PC-3 (cell line): ENCODE measurements at regions of chr5 and their contacts with region 1.

Region 1: DNA sequence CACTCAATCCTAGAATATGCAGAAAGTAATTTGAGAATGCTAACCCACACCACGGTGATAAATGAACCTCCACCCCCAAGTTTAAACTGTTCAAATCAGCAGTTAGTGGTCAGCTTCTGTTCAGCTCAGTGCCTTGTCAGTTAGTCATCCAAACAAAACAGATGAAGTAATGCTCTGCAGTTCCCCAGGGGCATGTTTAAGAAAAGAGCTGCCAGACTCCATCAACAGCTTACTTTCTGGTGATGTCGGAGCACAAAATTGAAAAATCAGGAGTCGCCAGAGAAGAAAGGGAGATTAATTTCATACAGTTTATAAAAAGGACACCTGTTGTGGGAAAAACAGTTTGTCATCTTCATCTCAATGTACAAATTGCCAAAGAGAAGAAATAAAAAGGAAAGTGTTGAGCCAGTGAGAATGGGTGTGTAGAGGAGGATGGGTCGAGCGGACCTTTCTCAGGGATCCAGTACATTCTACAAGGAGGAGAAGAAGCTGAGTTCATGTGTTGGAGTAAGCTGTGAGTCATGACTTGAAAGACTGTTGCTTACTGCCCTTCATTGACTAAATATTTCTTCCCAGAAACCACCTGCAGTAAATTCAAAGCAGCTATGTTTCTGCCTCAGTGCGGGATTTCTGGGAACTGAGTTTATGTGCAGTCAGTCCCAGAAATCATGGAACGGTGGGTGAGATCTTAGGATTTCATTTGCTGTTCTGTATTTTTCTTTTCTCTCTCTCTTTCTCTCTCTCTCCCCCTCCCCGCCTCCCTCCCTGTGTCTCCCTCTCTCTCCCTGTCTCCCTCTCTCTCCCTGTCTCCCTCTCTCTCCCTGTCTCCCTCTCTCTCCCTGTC is 13.7 kb downstream of the TRIO start:
- DNase-seq: peak; percentile 98
- ATAC-seq: peak; percentile 88
- H3K4me3 ChIP-seq: peak overlapping the region; percentile 63
- H3K27ac ChIP-seq: peak overlapping the region; percentile 94
- H3K4me1 ChIP-seq: peaks cover 74% of the 10 kb centered on the region
- H3K27me3 ChIP-seq: no peaks in the 10 kb centered on the region
- CTCF ChIP-seq: no peak

Region 2: GRCh38 chr5:14108170-14108996 is 48.5 kb before region 1 on chr5:
- CTCF ChIA-PET with region 1: no interaction called
- POLR2A ChIA-PET with region 1: no interaction called
- intact Hi-C with region 1: no loop called
- DNase-seq: peak; percentile 91
- ATAC-seq: peak; percentile 78
- H3K4me3 ChIP-seq: peak overlapping the region; percentile 34
- H3K27ac ChIP-seq: peak overlapping the region; percentile 93
- H3K4me1 ChIP-seq: peaks cover 63% of the 10 kb centered on the region
- H3K27me3 ChIP-seq: no peaks in the 10 kb centered on the region
- CTCF ChIP-seq: peak; percentile 88

Region 3: DNA sequence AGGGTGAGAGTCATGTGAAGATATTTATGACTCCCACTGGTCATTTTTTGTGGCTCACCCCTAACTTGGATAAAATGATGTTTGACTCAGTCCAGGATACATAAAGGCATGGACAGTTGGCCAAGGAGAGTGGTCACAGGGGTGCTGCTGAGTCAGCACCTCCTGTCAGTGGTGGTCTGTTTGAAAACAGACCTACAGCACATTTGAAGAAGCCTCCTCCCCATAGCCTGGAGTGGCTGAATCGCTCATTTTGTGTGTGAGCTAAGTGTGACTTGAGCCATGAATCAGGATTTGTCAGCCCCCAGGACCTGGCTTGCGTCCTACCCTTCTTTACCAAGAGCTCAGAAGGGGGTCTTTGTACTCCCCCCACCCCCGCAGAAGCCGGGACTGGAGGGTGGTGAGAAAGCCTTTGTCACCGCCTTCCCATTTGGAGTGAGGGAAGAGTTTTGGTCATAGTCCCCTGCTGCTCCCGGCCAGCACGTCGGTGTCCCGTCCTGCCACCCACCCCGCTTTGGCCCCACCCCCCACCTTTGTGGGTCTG is 21.9 kb after region 1 on chr5:
- CTCF ChIA-PET with region 1: interaction called, 4 read pairs
- POLR2A ChIA-PET with region 1: interaction called, 10 read pairs
- intact Hi-C with region 1: no loop called
- DNase-seq: peak; percentile 87
- ATAC-seq: peak; percentile 70
- H3K4me3 ChIP-seq: peak overlapping the region; percentile 28; the same call in 1 of the 2 replicates
- H3K27ac ChIP-seq: peak overlapping the region; percentile 73
- H3K4me1 ChIP-seq: peaks cover 74% of the 10 kb centered on the region
- H3K27me3 ChIP-seq: no peaks in the 10 kb centered on the region
- CTCF ChIP-seq: no peak

Region 4: DNA sequence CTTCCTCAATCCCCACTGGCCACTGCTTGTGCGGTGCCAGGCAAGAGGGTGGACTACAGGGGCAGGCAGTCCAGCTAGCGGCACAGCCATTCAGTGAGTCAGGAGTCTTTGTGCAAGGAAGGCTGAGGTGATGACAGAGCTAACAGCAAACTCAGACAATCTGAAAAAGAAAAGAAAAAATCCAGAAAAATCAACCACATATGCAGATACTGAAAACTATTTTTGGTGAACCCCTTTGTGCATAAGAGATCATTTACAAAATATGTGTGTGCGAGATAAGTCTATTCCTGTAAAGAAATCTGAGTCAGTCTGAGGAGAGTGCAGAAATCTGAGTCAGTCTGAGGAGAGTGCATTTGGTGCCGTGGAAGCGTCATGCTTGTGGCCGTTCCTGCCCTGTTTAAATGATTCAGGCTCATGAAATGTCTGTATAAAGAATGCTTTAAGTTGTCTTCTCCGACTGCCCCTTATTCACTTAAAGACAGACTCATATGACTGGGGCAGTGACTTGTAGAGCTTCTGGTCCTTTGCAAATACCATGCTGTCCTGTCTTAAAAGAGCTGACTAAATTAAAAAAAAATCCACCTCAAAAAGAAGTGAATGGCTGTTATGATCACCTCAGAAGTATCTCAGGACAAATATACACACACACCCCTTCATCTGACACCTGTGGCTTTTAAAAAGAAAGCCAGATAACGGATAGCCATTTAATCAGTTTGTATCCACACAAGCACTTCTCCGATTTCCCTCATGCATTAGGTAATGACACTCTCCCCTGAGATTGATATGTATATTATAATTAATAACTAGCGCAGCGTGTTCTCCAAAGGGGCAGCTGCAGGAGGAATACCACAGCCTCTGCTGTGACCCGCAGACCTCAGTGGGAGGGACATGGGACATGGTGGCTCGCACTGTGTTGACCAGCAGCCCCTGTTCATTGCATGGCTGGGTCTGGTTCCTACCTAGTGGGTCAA is 33.6 kb after region 1 on chr5:
- CTCF ChIA-PET with region 1: no interaction called
- POLR2A ChIA-PET with region 1: interaction called, 3 read pairs
- intact Hi-C with region 1: loop called (anchors 2 kb)
- DNase-seq: peak; percentile 99
- ATAC-seq: peak; percentile 84
- H3K4me3 ChIP-seq: peak overlapping the region; percentile 47
- H3K27ac ChIP-seq: peak overlapping the region; percentile 94
- H3K4me1 ChIP-seq: peaks cover 83% of the 10 kb centered on the region
- H3K27me3 ChIP-seq: no peaks in the 10 kb centered on the region
- CTCF ChIP-seq: no peak

Region 5: GRCh38 chr5:14364576-14365472 is 208.0 kb after region 1 on chr5:
- CTCF ChIA-PET with region 1: no interaction called
- POLR2A ChIA-PET with region 1: interaction called, 14 read pairs
- intact Hi-C with region 1: no loop called
- DNase-seq: peak; percentile 64
- ATAC-seq: peak; percentile 39; the same call in 1 of the 2 replicates
- H3K4me3 ChIP-seq: no peak overlapping the region
- H3K27ac ChIP-seq: no peak overlapping the region
- H3K4me1 ChIP-seq: peaks cover 20% of the 10 kb centered on the region
- H3K27me3 ChIP-seq: no peaks in the 10 kb centered on the region
- CTCF ChIP-seq: peak; percentile 91